Panc1 (cell line): ENCODE measurements at regions of chr3 and their contacts with region 1.

Region 1: DNA sequence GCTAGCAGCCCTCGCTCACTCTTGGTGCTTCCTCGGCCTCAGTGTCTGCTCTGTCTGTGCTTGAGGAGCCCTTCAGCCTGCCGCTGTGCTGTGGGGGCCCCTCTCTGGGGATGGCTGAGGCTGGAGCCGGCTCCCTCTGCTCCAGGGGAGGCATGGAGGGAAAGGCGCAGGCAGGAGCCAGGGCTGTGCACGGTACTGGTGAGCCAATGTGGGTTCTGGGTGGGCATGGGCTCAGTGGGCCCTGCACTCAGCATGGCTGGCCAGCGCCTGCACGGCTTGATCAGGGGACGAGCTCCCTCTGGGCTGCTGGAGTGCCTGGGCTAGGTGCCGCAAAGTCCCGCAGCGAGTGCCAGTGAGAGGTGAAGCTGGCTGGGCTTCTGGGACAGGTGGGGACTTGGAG is 260.0 kb downstream of the SI start:
- DNase-seq: no peak
- ATAC-seq: no peak
- H3K4me3 ChIP-seq: no peak overlapping the region
- H3K27ac ChIP-seq: no peak overlapping the region
- H3K4me1 ChIP-seq: no peaks in the 10 kb centered on the region
- H3K27me3 ChIP-seq: no peaks in the 10 kb centered on the region
- CTCF ChIP-seq: no peak

Region 2: GRCh38 chr3:164851905-164852304 is 33.6 kb after region 1 on chr3:
- CTCF ChIA-PET with region 1: no interaction called
- POLR2A ChIA-PET with region 1: interaction called, 13 read pairs
- in situ Hi-C with region 1: no loop called
- intact Hi-C with region 1: no loop called
- DNase-seq: no peak
- ATAC-seq: no peak
- H3K4me3 ChIP-seq: no peak overlapping the region
- H3K27ac ChIP-seq: no peak overlapping the region
- H3K4me1 ChIP-seq: no peaks in the 10 kb centered on the region
- H3K27me3 ChIP-seq: no peaks in the 10 kb centered on the region
- CTCF ChIP-seq: no peak